ENCODE measurements at regions of chr7 and their contacts with region 1.

Region 1: GRCh38 chr7:80659120-80660055 is 20.9 kb downstream of the CD36 start:
- DNase-seq: peak; percentile 62
- ATAC-seq: peak; percentile 90
- H3K4me3 ChIP-seq: no peak overlapping the region
- H3K27ac ChIP-seq: peak overlapping the region; percentile 11; the same call in 1 of the 2 replicates
- H3K4me1 ChIP-seq: peaks cover 2% of the 10 kb centered on the region
- H3K27me3 ChIP-seq: no peaks in the 10 kb centered on the region
- CTCF ChIP-seq: peak; percentile 74
- POLR2A ChIP-seq: no peak
- RAD21 ChIP-seq: peak; percentile 79

Region 2: GRCh38 chr7:79923953-79924352 is 735.4 kb before region 1 on chr7:
- CTCF ChIA-PET with region 1: no interaction called
- POLR2A ChIA-PET with region 1: no interaction called
- dilution Hi-C with region 1: no loop called
- in situ Hi-C with region 1: no loop called
- intact Hi-C with region 1: no loop called
- DNase-seq: peak; percentile 75
- ATAC-seq: peak; percentile 59
- H3K4me3 ChIP-seq: no peak overlapping the region
- H3K27ac ChIP-seq: no peak overlapping the region
- H3K4me1 ChIP-seq: peaks cover 2% of the 10 kb centered on the region; the same call in 1 of the 2 replicates
- H3K27me3 ChIP-seq: no peaks in the 10 kb centered on the region
- CTCF ChIP-seq: no peak
- POLR2A ChIP-seq: no peak
- RAD21 ChIP-seq: no peak

Region 3: DNA sequence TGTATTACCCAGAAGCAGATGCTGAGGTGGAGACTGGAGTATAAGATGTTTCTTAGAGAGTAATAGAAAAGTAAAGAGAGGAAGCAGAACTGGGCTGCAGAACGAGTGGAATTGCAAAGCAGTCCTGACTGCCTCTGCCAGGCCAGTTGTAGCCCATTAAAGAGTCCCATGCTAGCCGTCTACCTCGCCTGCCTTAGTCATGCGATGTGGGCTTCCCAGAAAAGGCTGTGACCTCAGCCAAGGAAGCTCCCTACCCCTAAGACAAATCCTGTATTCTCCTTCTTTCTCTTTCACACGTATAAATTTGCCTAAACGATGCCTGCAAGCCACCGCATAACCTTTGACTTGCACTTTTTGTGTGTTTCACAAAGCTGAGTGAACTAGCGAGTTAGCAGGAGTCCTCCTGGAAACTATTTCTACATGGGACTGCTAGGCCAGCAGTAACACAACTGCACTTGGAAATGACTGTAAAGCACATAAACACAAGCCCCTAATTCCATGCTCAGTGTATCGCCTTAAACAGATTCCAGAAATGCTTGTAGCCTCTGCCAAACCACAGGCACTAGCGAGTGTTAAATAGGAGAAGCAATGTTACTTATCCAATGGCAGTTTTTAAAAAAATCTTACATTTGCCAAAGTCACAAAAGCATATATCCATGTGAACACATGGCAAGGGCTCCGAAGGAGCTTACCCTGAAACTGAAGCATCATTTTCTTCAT is 572.2 kb before region 1 on chr7:
- CTCF ChIA-PET with region 1: no interaction called
- POLR2A ChIA-PET with region 1: no interaction called
- dilution Hi-C with region 1: no loop called
- in situ Hi-C with region 1: loop called (anchors 25 kb)
- intact Hi-C with region 1: loop called (anchors 10 kb)
- DNase-seq: peak; percentile 82
- ATAC-seq: peak; percentile 76
- H3K4me3 ChIP-seq: no peak overlapping the region
- H3K27ac ChIP-seq: peak overlapping the region; percentile 43
- H3K4me1 ChIP-seq: peaks cover 6% of the 10 kb centered on the region
- H3K27me3 ChIP-seq: no peaks in the 10 kb centered on the region
- CTCF ChIP-seq: no peak
- POLR2A ChIP-seq: no peak
- RAD21 ChIP-seq: no peak

Region 4: DNA sequence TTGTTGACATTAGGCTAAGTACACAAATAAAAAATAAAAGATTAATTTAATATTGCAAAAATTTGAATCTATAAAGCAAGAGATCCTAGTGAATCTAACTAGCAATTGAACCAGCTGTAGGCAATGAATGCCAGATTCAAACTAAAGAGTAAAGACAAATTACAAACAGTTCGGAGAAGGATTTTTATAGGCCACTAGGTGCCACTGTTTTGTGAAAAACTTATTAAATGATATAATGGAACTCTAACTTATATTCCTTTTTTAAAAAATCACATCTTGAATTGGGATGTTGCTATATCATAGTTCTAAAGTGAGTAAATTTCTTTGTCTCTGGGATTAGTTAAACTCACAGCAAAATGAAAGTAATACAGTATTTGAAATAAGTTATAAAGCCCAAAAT is 563.8 kb before region 1 on chr7:
- CTCF ChIA-PET with region 1: no interaction called
- POLR2A ChIA-PET with region 1: no interaction called
- dilution Hi-C with region 1: no loop called
- in situ Hi-C with region 1: loop called (anchors 25 kb)
- intact Hi-C with region 1: no loop called
- DNase-seq: peak; percentile 29
- ATAC-seq: no peak; the same call in 1 of the 2 replicates
- H3K4me3 ChIP-seq: no peak overlapping the region
- H3K27ac ChIP-seq: no peak overlapping the region
- H3K4me1 ChIP-seq: no peaks in the 10 kb centered on the region; the same call in 1 of the 2 replicates
- H3K27me3 ChIP-seq: no peaks in the 10 kb centered on the region
- CTCF ChIP-seq: peak; percentile 56
- POLR2A ChIP-seq: no peak
- RAD21 ChIP-seq: peak; percentile 44

Region 5: DNA sequence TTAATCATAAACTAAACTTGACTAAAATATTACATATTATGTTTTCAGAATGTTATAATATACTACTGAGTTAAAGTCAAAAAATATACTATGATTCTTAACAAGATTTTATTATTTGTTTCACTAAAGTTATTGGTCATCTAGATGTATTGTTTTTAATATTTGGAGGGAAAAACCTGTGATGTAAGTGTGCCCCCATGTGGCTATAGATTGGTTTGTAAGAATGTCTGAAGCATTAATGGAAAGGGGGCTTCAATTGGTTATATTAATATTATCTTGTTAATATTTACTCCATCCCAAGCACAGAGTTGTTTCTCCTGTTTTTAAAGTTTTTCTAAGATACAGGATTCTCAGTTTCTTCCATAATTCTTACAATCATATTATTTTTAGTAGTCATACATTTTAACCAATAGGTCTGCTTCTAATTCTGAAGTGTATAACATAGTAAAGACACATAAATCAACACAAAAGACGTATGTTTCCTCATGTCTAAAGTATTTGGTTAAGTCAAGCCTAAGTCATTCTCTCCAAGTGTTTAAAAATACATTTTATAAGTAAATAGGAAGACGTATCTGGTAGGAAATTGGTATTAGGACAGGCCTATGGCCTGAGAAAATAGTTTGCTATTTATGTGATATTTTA is 205.6 kb before region 1 on chr7:
- CTCF ChIA-PET with region 1: no interaction called
- POLR2A ChIA-PET with region 1: no interaction called
- dilution Hi-C with region 1: no loop called
- in situ Hi-C with region 1: no loop called
- intact Hi-C with region 1: loop called (anchors 1 kb)
- DNase-seq: peak; percentile 56
- ATAC-seq: peak; percentile 48; the same call in 1 of the 2 replicates
- H3K4me3 ChIP-seq: no peak overlapping the region
- H3K27ac ChIP-seq: no peak overlapping the region
- H3K4me1 ChIP-seq: peaks cover 7% of the 10 kb centered on the region; the same call in 1 of the 2 replicates
- H3K27me3 ChIP-seq: no peaks in the 10 kb centered on the region
- CTCF ChIP-seq: peak; percentile 59
- POLR2A ChIP-seq: no peak
- RAD21 ChIP-seq: peak; percentile 71

Region 6: GRCh38 chr7:81669476-81670105 is 1010.2 kb after region 1 on chr7:
- CTCF ChIA-PET with region 1: no interaction called
- POLR2A ChIA-PET with region 1: no interaction called
- dilution Hi-C with region 1: no loop called
- in situ Hi-C with region 1: no loop called
- intact Hi-C with region 1: no loop called
- DNase-seq: no peak
- ATAC-seq: no peak
- H3K4me3 ChIP-seq: no peak overlapping the region
- H3K27ac ChIP-seq: peak overlapping the region; percentile 60; the same call in 1 of the 2 replicates
- H3K4me1 ChIP-seq: peaks cover 2% of the 10 kb centered on the region
- H3K27me3 ChIP-seq: no peaks in the 10 kb centered on the region
- CTCF ChIP-seq: no peak
- POLR2A ChIP-seq: no peak
- RAD21 ChIP-seq: no peak